ENCODE measurements at regions of chr1 and their contacts with region 1.

Region 1: GRCh38 chr1:225318706-225319575 is 108.9 kb downstream of the LBR start:
- DNase-seq: no peak

Region 2: GRCh38 chr1:225824533-225824941 is 505.6 kb after region 1 on chr1:
- intact Hi-C with region 1: loop called in 1 of 2 experiments (anchors 5 kb)
- DNase-seq: peak; percentile 62

Region 3: GRCh38 chr1:225977937-225978748 is 659.2 kb after region 1 on chr1:
- intact Hi-C with region 1: loop called in 1 of 2 experiments (anchors 5 kb)
- DNase-seq: no peak

Measured in posterior vena cava (tissue), 2 donors.